Left cardiac atrium (tissue), 4 donors: ENCODE measurements at regions of chr2 and their contacts with region 1.

Region 1: DNA sequence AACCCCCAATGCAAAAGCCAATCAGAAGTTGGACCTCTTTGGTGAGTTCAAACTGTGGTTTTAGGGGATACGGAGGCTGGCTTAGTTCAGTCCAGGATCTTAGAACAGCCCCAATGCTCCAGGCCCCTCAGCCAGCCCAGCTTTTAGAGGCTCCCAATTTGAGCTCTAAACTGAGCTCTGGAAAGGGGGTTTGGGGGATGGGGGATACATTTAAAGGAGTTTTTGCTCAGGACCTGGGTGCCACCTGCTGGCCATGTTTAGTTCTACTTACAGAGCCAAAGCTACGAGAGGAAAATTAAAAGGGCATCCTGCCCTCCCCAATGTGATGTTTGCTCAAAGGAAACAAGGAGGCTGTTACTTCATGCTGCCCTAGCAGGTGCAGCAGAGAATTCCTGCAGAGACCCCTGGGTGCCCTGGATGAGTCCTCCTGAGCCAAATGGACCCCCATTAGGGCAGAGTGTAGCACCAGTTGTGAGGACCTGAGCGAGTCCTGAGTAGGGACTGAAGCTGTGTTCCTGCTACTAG is 15.9 kb upstream of the TMEM214 start:
- DNase-seq: peak; percentile 70
- ATAC-seq: peak; percentile 24 to 27

Region 2: GRCh38 chr2:26605195-26605998 is 411.5 kb before region 1 on chr2:
- intact Hi-C with region 1: no loop called
- DNase-seq: no peak
- ATAC-seq: peak; percentile 64 to 72

Region 3: DNA sequence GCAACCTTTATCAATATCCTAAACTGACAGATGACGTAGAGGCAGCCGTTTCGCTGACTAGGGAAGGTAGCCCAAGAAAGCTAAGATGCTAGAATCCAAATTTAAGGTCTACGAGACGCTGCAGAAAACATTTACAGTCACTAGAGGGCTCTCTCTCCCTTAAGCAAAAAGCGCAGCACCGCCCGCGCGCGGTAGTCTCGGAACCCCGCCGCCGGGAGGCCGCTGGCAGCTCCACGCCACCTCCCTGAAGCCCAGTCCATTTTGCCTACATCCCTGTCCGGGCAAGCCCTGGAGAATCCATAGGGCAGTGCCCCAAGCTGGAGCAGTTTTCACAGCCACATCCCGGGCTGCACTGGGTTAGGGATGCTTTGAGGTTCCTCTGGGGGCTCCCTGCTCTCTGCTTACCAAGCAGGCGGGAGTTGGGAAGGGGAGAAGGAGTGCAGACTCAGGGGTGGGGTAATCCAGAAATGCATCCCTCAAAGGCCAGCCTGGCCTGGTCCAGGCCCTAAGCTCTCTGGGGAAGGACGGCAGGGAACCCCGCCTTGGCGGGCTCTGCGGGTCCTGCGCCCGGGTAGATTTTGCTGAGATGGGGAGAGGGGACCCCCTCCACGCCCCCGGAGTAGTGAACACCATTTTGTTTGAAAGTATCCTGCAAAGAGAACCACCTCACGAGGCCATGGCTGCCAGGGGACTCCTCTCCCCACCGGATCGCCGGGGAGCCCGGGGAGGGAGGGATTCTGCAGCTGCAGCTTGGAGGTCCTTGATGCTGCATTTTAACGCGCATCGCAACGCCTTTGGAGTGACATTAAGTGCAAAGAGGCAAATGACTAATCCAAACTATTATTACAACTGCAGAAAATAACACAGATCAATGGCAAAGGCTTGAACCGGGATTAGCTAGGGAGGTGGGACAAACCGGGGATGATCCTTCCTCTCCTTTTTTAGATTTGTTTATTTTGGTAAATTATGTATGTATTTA is 170.2 kb before region 1 on chr2:
- intact Hi-C with region 1: no loop called
- DNase-seq: peak; percentile 77
- ATAC-seq: peak; percentile 76 to 82

Region 4: GRCh38 chr2:26959331-26959730 is 57.5 kb before region 1 on chr2:
- intact Hi-C with region 1: loop called (anchors 1 to 5 kb)
- DNase-seq: no peak
- ATAC-seq: peak in 1 of 2 donors; percentile 28

Region 5: DNA sequence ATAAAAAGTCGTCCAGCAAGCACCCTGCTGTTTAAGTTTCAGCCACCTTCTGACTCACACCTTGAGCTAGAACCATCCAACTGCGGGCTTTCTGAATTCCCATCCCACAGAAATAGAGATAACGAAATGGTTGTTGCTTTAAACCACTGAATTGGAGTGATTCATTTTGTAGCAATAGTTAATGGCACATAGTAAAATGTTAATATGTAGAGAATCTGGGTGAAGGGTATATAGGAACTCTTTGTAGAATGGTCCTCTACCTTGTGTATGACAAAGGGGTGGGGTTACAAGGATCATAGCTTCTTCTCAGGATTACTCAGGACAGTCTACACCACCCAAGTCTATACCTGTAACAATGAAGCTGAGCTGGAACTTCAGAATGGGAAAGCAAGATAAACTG is 48.9 kb before region 1 on chr2:
- intact Hi-C with region 1: loop called in 1 of 2 experiments (anchors 5 kb)
- DNase-seq: no peak
- ATAC-seq: no peak